AG04450 (cell line): ENCODE measurements at regions of chr1 and their contacts with region 1.

Region 1: GRCh38 chr1:28088168-28088961 is at the start of gene EYA3:
- DNase-seq: peak; percentile 94
- H3K4me3 ChIP-seq: peak within 1 kb of the TSS; percentile 80
- H3K27ac ChIP-seq: peak within 1 kb of the TSS; percentile 87
- H3K27me3 ChIP-seq: no peaks in the 10 kb centered on the region
- CTCF ChIP-seq: no peak
- polyA plus RNA-seq, gene EYA3: 15.4 and 17.0 TPM in 2 replicates

Region 2: DNA sequence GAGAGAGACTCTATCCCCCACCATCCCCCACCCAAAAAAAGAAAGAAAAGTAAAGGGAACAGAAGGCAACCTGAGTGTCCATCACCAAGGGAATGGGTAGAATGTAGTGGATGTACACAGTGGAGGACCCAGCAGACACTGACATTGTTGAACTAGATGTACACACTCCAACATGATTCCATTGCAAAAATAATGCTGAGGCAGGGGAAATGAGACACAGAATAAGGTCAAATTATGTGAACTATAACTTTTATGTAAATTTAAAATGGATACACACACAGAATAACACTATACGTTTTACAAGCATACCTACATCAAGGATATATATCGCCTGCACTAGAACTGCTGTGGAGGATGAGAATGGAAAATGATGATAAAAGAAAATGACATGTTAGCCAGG is 53.3 kb after region 1 on chr1:
- CTCF ChIA-PET with region 1: no interaction called
- POLR2A ChIA-PET with region 1: no interaction called
- DNase-seq: no peak
- H3K4me3 ChIP-seq: no peak overlapping the region
- H3K27ac ChIP-seq: no peak overlapping the region
- H3K27me3 ChIP-seq: no peaks in the 10 kb centered on the region
- CTCF ChIP-seq: no peak

Region 3: DNA sequence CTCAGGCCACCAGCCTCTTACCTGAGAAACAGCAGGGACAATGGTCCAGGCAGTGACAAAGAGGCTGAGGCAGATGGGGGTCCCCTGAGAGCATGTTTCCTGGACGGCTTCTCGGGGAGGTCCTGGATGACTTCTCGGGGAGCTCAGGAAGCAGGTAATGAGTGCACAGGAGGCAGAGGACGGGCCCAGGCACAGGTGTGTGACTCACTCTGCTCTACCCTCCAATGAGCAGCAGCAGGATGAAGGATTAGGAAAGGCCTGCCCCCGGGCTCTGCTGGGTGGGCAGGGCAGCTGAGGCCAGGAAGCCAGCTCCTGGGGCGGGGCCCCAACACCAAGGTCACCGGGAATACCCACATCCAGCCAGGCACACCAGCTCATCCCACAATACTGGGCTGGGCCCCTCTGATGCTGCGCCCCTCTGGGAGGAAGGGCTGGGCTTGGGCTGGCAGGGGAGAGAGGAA is 105.4 kb after region 1 on chr1:
- CTCF ChIA-PET with region 1: interaction called, 21 read pairs
- POLR2A ChIA-PET with region 1: no interaction called
- DNase-seq: no peak
- H3K4me3 ChIP-seq: no peak overlapping the region
- H3K27ac ChIP-seq: no peak overlapping the region
- H3K27me3 ChIP-seq: no peaks in the 10 kb centered on the region
- CTCF ChIP-seq: no peak

Region 4: GRCh38 chr1:28266920-28267322 is 178.6 kb after region 1 on chr1:
- CTCF ChIA-PET with region 1: no interaction called
- POLR2A ChIA-PET with region 1: no interaction called
- DNase-seq: no peak
- H3K4me3 ChIP-seq: no peak overlapping the region
- H3K27ac ChIP-seq: no peak overlapping the region
- H3K27me3 ChIP-seq: no peaks in the 10 kb centered on the region
- CTCF ChIP-seq: no peak

Region 5: GRCh38 chr1:28412731-28413130 is 324.4 kb after region 1 on chr1:
- CTCF ChIA-PET with region 1: no interaction called
- POLR2A ChIA-PET with region 1: no interaction called
- DNase-seq: no peak
- H3K4me3 ChIP-seq: no peak overlapping the region
- H3K27ac ChIP-seq: no peak overlapping the region
- H3K27me3 ChIP-seq: no peaks in the 10 kb centered on the region
- CTCF ChIP-seq: no peak